Prostate gland (tissue), 2 donors: ENCODE measurements at regions of chr15 and their contacts with region 1.

Region 1: GRCh38 chr15:58331903-58332675 is 99.7 kb upstream of the LIPC start:
- DNase-seq: peak; percentile 95
- H3K4me3 ChIP-seq: no peak overlapping the region
- H3K27ac ChIP-seq: peak overlapping the region; percentile 96 to 98
- H3K4me1 ChIP-seq: peaks cover 35% of the 10 kb centered on the region
- H3K27me3 ChIP-seq: no peaks in the 10 kb centered on the region
- CTCF ChIP-seq: no peak
- POLR2A ChIP-seq: peak; percentile 42

Region 2: DNA sequence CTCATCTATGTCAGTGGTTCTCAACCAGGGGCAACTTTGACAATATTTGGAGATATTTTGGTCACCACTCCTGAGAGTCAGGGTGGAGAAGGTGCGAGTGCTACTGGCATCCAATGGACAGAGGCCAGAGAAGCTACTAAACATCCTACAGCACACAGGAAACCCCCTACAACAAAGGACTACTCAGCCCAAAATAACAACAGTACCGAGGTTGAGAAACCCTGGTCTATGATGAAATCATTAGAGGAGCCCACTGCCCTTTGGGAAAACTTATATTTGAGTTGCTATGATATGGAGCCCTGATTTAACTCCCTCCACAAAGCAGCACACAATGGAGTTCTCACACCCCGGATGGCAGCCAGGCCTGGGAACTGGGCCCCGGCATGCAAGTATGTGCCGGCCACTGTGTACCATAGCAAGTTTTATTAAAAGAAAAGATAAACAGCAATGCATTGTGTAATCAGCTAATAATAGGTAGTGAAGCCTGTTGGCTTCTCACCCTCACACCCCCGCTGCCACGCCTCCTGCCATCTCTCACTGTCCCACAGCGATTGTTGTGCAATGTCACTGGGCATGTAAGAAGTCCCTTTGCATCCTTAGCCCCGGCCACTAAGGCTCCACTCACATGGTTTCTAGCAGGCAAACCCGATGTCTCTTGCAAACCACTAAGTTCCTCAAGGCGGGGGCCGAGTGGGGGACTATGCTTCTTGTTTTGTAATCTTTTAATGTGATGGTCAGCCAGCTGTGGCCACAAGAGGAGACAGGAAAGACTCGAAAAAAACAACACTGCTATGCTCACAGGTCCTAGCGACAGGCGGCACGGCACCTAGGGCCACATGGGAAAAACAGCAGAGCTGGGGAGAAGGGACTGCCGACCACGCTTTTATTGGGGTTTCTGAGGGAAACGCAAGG is 84.0 kb before region 1 on chr15:
- intact Hi-C with region 1: loop called (anchors 5 kb)
- DNase-seq: peak; percentile 93
- H3K4me3 ChIP-seq: no peak overlapping the region
- H3K27ac ChIP-seq: peak overlapping the region; percentile 63 to 75
- H3K4me1 ChIP-seq: peaks cover 6% of the 10 kb centered on the region
- H3K27me3 ChIP-seq: no peaks in the 10 kb centered on the region
- CTCF ChIP-seq: peak in 1 of 4 experiments; percentile 17
- POLR2A ChIP-seq: no peak

Region 3: GRCh38 chr15:58361291-58361759 is 29.2 kb after region 1 on chr15:
- intact Hi-C with region 1: no loop called
- DNase-seq: no peak
- H3K4me3 ChIP-seq: no peak overlapping the region
- H3K27ac ChIP-seq: no peak overlapping the region
- H3K4me1 ChIP-seq: no peaks in the 10 kb centered on the region
- H3K27me3 ChIP-seq: no peaks in the 10 kb centered on the region
- CTCF ChIP-seq: no peak
- POLR2A ChIP-seq: no peak

Region 4: DNA sequence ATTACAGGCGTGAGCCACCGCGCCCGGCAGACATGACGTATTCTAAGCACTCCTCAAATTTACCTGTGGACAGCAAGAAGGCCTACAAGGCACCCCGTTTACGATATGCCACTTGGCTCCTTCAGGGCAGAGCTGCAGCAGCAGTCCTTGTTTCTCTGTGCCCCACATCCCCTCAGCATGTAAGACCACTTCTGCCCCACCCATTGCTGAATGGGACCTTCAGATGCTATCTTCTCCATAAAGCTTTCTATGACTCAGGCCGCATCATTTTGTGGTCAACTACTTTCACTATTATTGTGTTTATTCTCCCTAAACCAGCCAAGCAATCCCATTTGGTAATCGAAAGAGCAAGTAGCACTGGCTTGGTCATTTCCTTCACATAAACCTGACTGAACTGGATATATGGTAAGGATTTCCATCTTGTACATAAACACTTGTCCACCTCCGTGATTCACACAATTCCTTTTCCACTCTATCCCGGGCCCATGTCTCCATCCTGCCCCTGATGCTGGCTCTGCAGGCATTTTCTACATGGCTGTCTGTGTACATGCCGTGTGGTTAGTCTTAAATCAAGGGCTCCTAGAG is 125.4 kb after region 1 on chr15:
- intact Hi-C with region 1: no loop called
- DNase-seq: no peak
- H3K4me3 ChIP-seq: no peak overlapping the region
- H3K27ac ChIP-seq: no peak overlapping the region
- H3K4me1 ChIP-seq: no peaks in the 10 kb centered on the region
- H3K27me3 ChIP-seq: no peaks in the 10 kb centered on the region
- CTCF ChIP-seq: no peak
- POLR2A ChIP-seq: no peak

Region 5: DNA sequence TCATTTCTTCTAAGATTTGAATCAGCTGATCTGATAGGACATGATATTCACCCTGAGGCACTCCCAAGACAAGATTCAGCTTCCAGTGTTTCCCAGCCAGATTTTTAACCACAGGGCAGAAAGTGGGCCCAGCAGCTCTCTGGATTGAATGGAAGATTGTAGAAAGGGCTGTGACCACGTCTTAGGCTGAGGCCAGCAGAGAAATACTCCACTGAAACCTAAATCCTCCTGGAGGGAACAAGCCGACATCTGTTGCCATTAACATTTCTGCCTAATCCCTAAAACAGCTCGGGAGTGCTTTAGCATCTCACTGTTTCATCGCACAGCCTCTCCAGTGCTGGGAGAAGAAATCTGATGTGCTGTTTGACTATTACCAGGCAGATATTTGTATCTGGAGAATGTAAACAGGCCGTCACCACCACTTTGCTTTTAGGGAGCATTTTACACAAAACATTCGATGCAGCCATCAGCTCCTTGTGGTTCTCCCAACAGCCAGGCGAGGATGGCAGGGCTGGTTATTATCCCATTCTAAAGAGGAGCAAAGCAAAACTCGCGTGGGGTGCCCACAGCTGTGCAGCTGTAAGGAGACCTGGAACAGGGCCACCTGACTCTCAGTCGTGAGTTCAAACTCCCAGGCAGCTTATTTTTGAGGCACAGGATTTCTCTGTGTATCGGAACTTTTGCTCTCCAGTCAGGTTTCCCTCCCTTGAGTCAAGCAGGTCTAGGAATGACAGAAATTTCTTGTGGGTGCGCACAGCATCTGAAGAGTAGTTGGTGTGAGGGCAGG is 217.1 kb after region 1 on chr15:
- intact Hi-C with region 1: loop called (anchors 2 kb)
- DNase-seq: no peak
- H3K4me3 ChIP-seq: no peak overlapping the region
- H3K27ac ChIP-seq: no peak overlapping the region
- H3K4me1 ChIP-seq: peaks cover 3% of the 10 kb centered on the region
- H3K27me3 ChIP-seq: no peaks in the 10 kb centered on the region
- CTCF ChIP-seq: no peak
- POLR2A ChIP-seq: no peak

Region 6: DNA sequence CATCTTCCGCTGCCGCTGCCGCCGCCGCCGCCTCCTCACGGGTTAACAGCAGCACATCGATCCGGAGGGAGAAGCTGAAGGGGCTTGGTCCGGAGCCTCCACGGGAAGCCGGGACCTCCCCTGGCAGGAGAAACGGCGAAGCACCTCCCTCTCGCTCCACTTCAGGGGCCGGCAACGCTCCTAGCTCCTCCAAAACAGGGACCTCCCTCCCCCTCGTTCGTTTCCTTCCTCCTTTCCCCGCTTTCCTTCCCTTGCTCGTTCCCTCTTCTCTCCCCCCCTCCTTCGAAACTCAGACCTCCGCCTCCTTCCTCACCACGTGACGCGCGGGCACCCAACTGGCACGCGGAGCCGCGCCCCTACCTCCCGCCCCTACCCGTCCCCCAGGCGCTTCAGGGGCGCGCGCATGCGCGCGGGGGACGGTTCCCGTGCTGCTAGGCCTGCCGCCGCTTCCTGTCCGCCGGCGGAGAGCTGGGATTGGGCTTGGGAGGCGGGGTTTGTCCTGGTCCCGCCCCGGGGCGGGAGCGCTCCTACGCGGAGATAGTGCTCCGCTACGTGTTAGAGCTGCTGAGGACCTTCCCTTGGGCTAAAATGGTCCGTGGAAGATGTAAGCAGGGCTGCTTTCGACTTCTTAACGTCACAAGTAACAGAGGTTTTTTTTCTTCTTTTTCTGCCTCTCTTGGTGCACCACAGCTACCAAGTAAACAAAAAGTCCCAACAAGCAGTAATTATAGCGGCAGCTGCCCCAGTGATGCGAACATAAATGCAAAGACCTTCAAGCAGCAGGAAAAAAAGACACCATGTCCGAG is 417.6 kb after region 1 on chr15 and contains the start of gene ADAM10:
- intact Hi-C with region 1: loop called (anchors 5 kb)
- DNase-seq: peak; percentile 99
- H3K4me3 ChIP-seq: peak within 1 kb of the TSS; percentile 94
- H3K27ac ChIP-seq: peak within 1 kb of the TSS; percentile 98 to 99
- H3K4me1 ChIP-seq: no peaks in the 10 kb centered on the region
- H3K27me3 ChIP-seq: no peaks in the 10 kb centered on the region
- CTCF ChIP-seq: peak in 2 of 4 experiments; percentile 13 to 14
- POLR2A ChIP-seq: peak; percentile 93
- total RNA-seq, gene ADAM10: 74.4 to 95.0 TPM